HepG2 (cell line): ENCODE measurements at regions of chr6 and their contacts with region 1.

Region 1: DNA sequence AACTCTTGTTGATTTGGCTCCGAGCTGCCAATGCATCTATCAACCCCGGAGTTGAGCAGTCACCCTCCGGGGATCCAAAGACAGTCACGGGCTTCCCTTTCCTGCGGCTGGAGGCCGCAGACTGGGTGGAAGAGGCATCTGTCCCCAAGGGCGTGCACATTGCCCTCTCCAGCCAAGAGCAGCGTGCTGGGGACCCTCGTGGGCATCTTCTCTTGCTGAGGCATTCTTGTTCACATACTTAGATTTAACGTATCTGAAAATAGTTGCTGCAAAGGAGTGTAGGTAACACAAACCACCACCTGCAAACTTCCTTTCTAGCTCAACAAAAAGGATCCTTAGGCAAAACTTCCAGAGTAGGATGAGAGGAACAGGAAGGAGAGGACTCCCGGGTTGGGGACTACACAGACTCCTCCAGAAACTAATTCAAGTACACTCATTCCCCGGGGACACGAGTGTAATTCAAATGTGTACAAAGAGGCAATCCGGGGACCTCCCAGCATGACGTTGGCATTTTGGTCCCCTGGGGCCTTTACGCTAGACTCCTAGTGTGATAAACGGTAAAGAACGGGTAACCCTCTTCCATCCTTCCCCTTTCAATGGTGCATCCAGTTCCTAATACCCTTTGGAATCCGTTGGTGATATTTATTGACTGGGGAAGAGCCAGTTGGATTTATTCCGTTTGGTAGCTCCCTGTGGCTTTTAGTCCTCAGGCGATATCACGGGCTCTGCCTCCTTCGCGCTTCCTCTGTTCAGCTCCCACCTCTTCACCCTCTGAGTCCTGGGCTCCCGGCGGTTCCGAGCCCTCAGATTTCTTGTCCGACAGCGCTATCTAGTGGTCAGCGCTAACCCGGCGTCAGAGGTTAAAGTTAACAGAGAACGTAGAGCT is 2.7 kb upstream of the COL12A1 start:
- DNase-seq: peak; percentile 58
- ATAC-seq: peak; percentile 91
- H3K4me3 ChIP-seq: no peak overlapping the region
- H3K27ac ChIP-seq: no peak overlapping the region
- H3K4me1 ChIP-seq: no peaks in the 10 kb centered on the region; the same call in 1 of the 2 replicates
- H3K27me3 ChIP-seq: peaks cover 5 to 51% of the 10 kb centered on the region in 2 experiments; a peak in 4 of 5 replicates
- CTCF ChIP-seq: peak; percentile 89
- EP300 ChIP-seq: no peak
- POLR2A ChIP-seq: no peak
- RAD21 ChIP-seq: peak; percentile 80

Region 2: DNA sequence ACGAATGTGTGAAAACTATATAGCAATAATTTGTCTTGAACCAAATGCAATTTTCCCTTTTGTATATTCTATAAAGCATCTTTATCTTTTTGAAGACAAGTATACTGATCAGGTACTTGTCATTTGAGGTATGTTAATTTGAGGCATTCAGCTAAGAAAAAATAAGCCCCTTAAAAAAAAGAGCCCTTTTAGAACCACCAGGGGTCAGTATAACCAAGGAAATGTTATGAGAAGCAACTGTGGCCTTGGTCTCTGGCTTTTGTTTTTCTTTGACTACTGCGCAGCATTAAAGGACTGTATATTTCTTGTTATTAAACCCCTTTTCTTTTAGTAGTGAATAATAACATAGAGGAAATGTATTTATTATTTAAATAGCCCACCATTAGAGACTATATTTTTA is 1469.4 kb before region 1 on chr6:
- CTCF ChIA-PET with region 1: interaction called, 11 read pairs
- POLR2A ChIA-PET with region 1: no interaction called
- in situ Hi-C with region 1: loop called (anchors 25 kb)
- intact Hi-C with region 1: no loop called
- DNase-seq: peak; percentile 66
- ATAC-seq: peak; percentile 84
- H3K4me3 ChIP-seq: no peak overlapping the region
- H3K27ac ChIP-seq: no peak overlapping the region
- H3K4me1 ChIP-seq: no peaks in the 10 kb centered on the region
- H3K27me3 ChIP-seq: no peaks in the 10 kb centered on the region
- CTCF ChIP-seq: peak; percentile 74
- EP300 ChIP-seq: no peak
- POLR2A ChIP-seq: no peak
- RAD21 ChIP-seq: peak; percentile 65

Region 3: GRCh38 chr6:73969971-73970970 is 1238.3 kb before region 1 on chr6:
- CTCF ChIA-PET with region 1: interaction called, 6 read pairs
- POLR2A ChIA-PET with region 1: no interaction called
- in situ Hi-C with region 1: loop called (anchors 25 kb)
- intact Hi-C with region 1: loop called (anchors 2 kb)
- DNase-seq: peak; percentile 52
- ATAC-seq: peak; percentile 74
- H3K4me3 ChIP-seq: no peak overlapping the region
- H3K27ac ChIP-seq: no peak overlapping the region
- H3K4me1 ChIP-seq: no peaks in the 10 kb centered on the region
- H3K27me3 ChIP-seq: no peaks in the 10 kb centered on the region
- CTCF ChIP-seq: peak; percentile 56
- EP300 ChIP-seq: no peak
- POLR2A ChIP-seq: no peak
- RAD21 ChIP-seq: no peak

Region 4: DNA sequence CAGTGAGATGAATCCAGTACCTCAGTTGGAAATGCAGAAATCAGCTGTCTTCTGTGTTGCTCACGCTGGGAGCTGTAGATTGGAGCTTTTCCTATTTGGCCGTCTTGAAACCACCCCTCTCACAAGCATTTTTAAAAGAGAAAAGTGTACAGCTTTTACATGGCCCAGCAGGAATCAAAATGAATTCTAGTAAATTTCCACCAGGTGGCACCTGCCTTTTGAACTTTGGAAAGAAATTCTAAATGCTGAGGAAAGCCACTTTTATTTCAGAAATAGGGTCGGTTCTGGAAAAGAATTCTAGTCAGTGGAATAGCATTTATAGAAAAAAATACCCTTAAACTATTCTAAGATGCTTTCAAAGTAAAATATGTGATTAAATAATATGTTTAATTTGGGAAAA is 864.7 kb before region 1 on chr6:
- CTCF ChIA-PET with region 1: interaction called, 5 read pairs
- POLR2A ChIA-PET with region 1: no interaction called
- in situ Hi-C with region 1: no loop called
- intact Hi-C with region 1: loop called (anchors 1 kb)
- DNase-seq: peak; percentile 4
- ATAC-seq: peak; percentile 76
- H3K4me3 ChIP-seq: no peak overlapping the region
- H3K27ac ChIP-seq: no peak overlapping the region
- H3K4me1 ChIP-seq: no peaks in the 10 kb centered on the region
- H3K27me3 ChIP-seq: no peaks in the 10 kb centered on the region
- CTCF ChIP-seq: peak; percentile 43
- EP300 ChIP-seq: no peak
- POLR2A ChIP-seq: no peak
- RAD21 ChIP-seq: no peak

Region 5: GRCh38 chr6:74574794-74575193 is 633.7 kb before region 1 on chr6:
- CTCF ChIA-PET with region 1: no interaction called
- POLR2A ChIA-PET with region 1: no interaction called
- in situ Hi-C with region 1: loop called (anchors 25 kb)
- intact Hi-C with region 1: loop called (anchors 2 kb)
- DNase-seq: peak; percentile 49
- ATAC-seq: peak; percentile 91
- H3K4me3 ChIP-seq: no peak overlapping the region
- H3K27ac ChIP-seq: no peak overlapping the region
- H3K4me1 ChIP-seq: no peaks in the 10 kb centered on the region
- H3K27me3 ChIP-seq: no peaks in the 10 kb centered on the region
- CTCF ChIP-seq: peak; percentile 79
- EP300 ChIP-seq: no peak
- POLR2A ChIP-seq: no peak
- RAD21 ChIP-seq: peak; percentile 65

Region 6: GRCh38 chr6:74899416-74899815 is 309.1 kb before region 1 on chr6:
- CTCF ChIA-PET with region 1: interaction called, 5 read pairs
- POLR2A ChIA-PET with region 1: no interaction called
- in situ Hi-C with region 1: no loop called
- intact Hi-C with region 1: loop called (anchors 2 kb)
- DNase-seq: peak; percentile 8
- ATAC-seq: peak; percentile 50; the same call in 2 of the 3 replicates
- H3K4me3 ChIP-seq: no peak overlapping the region
- H3K27ac ChIP-seq: no peak overlapping the region
- H3K4me1 ChIP-seq: no peaks in the 10 kb centered on the region
- H3K27me3 ChIP-seq: no peaks in the 10 kb centered on the region
- CTCF ChIP-seq: peak; percentile 36
- EP300 ChIP-seq: no peak
- POLR2A ChIP-seq: no peak
- RAD21 ChIP-seq: peak; percentile 32; the same call in 1 of the 2 replicates

Region 7: DNA sequence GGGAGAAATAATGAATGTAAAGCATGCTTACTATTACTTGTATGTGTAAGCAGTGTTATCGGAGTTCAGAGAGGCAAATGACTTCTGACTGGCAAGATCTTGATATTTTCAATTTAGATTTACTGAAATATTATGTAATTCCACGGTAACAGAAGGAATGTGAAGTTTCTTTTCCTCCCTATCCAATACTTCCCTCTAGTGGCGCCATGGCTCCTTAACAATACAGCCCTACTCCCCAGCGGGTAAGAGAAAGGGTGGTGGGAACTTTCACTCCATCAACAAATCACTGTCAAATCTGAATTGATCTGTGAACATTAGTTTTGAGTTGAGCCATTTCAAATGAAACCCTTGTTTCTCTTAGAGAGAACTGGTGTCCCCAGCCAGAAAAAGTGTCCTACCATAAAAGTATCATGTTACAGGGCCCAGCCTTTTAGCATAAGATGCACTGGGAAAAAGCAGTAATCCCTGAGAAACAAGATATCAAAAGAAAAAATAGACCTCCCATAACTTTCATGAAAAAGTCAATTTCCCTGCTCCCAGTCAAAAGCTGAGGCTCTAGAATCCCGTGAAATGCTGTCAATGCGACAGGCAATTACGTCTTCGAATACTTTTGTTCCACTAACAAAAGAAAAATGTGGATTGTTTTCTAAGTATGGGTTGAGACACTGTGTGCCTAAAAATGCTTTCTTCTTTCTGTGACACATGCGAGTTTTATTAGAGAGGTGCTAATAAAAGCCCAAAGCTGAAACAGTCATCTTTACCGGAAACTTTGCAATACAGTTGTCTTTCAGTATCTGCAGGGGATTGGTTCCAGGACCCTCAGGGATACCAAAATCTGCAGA is 22.2 kb after region 1 on chr6:
- CTCF ChIA-PET with region 1: no interaction called
- POLR2A ChIA-PET with region 1: no interaction called
- in situ Hi-C with region 1: no loop called
- intact Hi-C with region 1: loop called (anchors 2 kb)
- DNase-seq: peak; percentile 58
- ATAC-seq: peak; percentile 94
- H3K4me3 ChIP-seq: no peak overlapping the region
- H3K27ac ChIP-seq: no peak overlapping the region
- H3K4me1 ChIP-seq: no peaks in the 10 kb centered on the region
- H3K27me3 ChIP-seq: no peaks in the 10 kb centered on the region
- CTCF ChIP-seq: peak; percentile 78
- EP300 ChIP-seq: no peak
- POLR2A ChIP-seq: no peak
- RAD21 ChIP-seq: no peak

Region 8: DNA sequence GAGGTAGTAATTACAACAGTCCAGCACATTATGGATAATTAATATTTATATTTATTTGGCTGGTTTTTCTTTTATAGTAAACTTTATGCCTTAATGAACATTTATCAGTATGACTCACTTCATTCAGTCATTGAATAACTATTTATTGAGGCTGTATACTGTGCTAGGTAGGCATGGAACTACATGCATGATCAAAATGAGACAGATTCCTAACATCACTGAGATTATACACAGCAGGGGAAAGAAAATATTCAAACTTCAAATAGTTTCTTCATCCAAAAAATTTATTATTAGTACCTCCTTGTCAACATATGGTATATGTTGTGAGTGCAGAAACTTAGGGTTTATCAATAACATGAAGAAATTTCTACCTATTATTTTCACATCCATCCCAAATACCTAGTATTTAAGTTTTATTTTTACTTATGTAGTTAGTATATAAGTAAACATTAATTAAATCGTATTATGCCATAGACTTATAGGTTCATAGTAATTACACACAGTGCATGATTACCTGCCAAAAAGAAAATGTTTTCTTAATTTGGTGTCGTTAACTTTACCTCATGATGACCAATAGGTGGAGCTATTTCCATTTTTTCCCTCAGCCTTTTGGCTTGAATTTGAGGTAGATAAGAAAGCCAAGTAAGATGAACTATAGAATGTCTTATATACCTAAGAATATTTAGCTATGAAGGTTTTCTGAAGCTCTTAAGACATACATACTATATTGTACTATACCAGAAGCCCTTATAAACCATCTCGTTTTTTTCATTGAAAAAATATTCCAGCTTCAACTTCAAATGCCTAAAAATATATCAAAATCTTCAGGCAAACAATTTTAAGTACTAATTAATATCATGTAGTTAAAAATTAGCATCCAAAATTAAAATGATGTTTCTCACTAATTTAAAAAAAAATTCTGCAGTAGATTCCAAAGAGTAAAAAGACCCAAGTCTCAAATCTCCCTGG is 88.6 kb after region 1 on chr6:
- CTCF ChIA-PET with region 1: no interaction called
- POLR2A ChIA-PET with region 1: no interaction called
- in situ Hi-C with region 1: no loop called
- intact Hi-C with region 1: no loop called
- DNase-seq: peak; percentile 57
- ATAC-seq: peak; percentile 56
- H3K4me3 ChIP-seq: no peak overlapping the region
- H3K27ac ChIP-seq: no peak overlapping the region
- H3K4me1 ChIP-seq: no peaks in the 10 kb centered on the region
- H3K27me3 ChIP-seq: no peaks in the 10 kb centered on the region
- CTCF ChIP-seq: peak; percentile 72
- EP300 ChIP-seq: no peak
- POLR2A ChIP-seq: no peak
- RAD21 ChIP-seq: peak; percentile 28; the same call in 1 of the 2 replicates

Region 9: DNA sequence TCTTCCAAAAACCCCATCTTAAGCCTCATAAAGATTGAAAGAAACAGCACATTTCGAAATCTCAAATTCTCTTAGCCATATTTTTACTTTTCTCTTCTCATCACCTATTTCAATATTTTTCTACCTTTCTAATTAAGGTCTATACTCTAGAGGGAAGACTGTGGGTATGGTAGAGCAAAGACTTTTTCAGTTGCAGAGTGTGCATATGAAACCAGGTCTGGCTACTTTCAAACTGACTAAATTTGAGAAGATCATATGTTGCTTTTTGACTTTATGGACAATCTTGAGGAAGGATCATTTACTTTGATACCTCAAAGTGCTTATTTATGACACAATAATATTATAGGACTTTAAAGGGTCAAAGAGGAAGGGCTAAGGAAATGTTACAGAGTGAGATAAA is 264.3 kb after region 1 on chr6:
- CTCF ChIA-PET with region 1: no interaction called
- POLR2A ChIA-PET with region 1: no interaction called
- in situ Hi-C with region 1: no loop called
- intact Hi-C with region 1: no loop called
- DNase-seq: no peak
- ATAC-seq: no peak
- H3K4me3 ChIP-seq: no peak overlapping the region
- H3K27ac ChIP-seq: no peak overlapping the region
- H3K4me1 ChIP-seq: no peaks in the 10 kb centered on the region
- H3K27me3 ChIP-seq: no peaks in the 10 kb centered on the region
- CTCF ChIP-seq: no peak
- EP300 ChIP-seq: no peak
- POLR2A ChIP-seq: no peak
- RAD21 ChIP-seq: no peak